MCF 10A (cell line): ENCODE measurements at regions of chr1 and their contacts with region 1.

Region 1: GRCh38 chr1:211654838-211655787 is 20.3 kb downstream of the NEK2 start:
- DNase-seq: peak; percentile 95
- H3K4me3 Mint-ChIP-seq: no peak overlapping the region
- H3K27ac Mint-ChIP-seq: no peak overlapping the region
- H3K4me1 Mint-ChIP-seq: peaks cover 26% of the 10 kb centered on the region
- H3K27me3 Mint-ChIP-seq: no peaks in the 10 kb centered on the region
- CTCF ChIP-seq: peak; percentile 100

Region 2: DNA sequence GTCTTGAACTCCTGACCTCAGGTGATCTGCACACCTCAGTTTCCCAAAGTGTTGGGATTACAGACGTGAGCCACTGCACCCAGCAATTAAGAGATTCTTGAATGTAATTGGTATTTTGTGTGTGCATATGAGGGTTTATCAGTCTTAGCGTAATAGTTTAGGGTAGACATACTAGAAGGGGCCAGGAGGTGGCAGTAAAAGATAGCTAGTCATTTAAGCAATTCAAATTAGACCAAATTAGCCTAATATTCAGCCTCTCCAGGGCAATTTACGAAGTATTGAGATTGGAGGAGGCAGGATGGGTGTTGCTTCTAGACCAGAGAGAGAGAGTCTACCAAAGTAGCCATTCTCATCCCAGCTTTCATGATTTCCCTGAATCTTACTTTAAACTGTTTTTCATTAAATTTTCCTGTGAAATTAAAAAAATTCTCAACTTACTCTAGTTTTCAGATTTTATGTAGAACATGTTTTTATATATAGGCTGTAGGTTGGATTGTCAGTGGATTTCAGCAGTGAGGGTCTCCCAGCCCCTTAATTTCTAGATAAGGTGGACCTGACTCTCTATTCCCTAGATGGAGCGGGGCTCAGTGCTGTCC is 1206.7 kb before region 1 on chr1:
- CTCF ChIA-PET with region 1: interaction called, 4 read pairs
- POLR2A ChIA-PET with region 1: no interaction called
- intact Hi-C with region 1: loop called (anchors 5 kb)
- DNase-seq: peak; percentile 71
- H3K4me3 Mint-ChIP-seq: no peak overlapping the region
- H3K27ac Mint-ChIP-seq: no peak overlapping the region
- H3K4me1 Mint-ChIP-seq: peaks cover 11% of the 10 kb centered on the region
- H3K27me3 Mint-ChIP-seq: peaks cover 52% of the 10 kb centered on the region
- CTCF ChIP-seq: peak; percentile 93

Region 3: GRCh38 chr1:211382714-211383480 is 272.2 kb before region 1 on chr1:
- CTCF ChIA-PET with region 1: interaction called, 3 read pairs
- POLR2A ChIA-PET with region 1: interaction called, 3 read pairs
- intact Hi-C with region 1: loop called (anchors 5 kb)
- DNase-seq: peak; percentile 99
- H3K4me3 Mint-ChIP-seq: peak overlapping the region; percentile 82
- H3K27ac Mint-ChIP-seq: peak overlapping the region; percentile 98
- H3K4me1 Mint-ChIP-seq: peaks cover 26% of the 10 kb centered on the region
- H3K27me3 Mint-ChIP-seq: no peaks in the 10 kb centered on the region
- CTCF ChIP-seq: no peak

Region 4: GRCh38 chr1:211527006-211527405 is 128.1 kb before region 1 on chr1:
- CTCF ChIA-PET with region 1: interaction called, 16 read pairs
- POLR2A ChIA-PET with region 1: no interaction called
- intact Hi-C with region 1: no loop called
- DNase-seq: no peak
- H3K4me3 Mint-ChIP-seq: no peak overlapping the region
- H3K27ac Mint-ChIP-seq: peak overlapping the region; percentile 4
- H3K4me1 Mint-ChIP-seq: peaks cover 39% of the 10 kb centered on the region
- H3K27me3 Mint-ChIP-seq: no peaks in the 10 kb centered on the region
- CTCF ChIP-seq: no peak

Region 5: GRCh38 chr1:211606914-211607755 is 48.0 kb before region 1 on chr1:
- CTCF ChIA-PET with region 1: interaction called, 36 read pairs
- POLR2A ChIA-PET with region 1: interaction called, 8 read pairs
- intact Hi-C with region 1: no loop called
- DNase-seq: peak; percentile 73
- H3K4me3 Mint-ChIP-seq: no peak overlapping the region
- H3K27ac Mint-ChIP-seq: no peak overlapping the region
- H3K4me1 Mint-ChIP-seq: peaks cover 40% of the 10 kb centered on the region
- H3K27me3 Mint-ChIP-seq: no peaks in the 10 kb centered on the region
- CTCF ChIP-seq: no peak

Region 6: DNA sequence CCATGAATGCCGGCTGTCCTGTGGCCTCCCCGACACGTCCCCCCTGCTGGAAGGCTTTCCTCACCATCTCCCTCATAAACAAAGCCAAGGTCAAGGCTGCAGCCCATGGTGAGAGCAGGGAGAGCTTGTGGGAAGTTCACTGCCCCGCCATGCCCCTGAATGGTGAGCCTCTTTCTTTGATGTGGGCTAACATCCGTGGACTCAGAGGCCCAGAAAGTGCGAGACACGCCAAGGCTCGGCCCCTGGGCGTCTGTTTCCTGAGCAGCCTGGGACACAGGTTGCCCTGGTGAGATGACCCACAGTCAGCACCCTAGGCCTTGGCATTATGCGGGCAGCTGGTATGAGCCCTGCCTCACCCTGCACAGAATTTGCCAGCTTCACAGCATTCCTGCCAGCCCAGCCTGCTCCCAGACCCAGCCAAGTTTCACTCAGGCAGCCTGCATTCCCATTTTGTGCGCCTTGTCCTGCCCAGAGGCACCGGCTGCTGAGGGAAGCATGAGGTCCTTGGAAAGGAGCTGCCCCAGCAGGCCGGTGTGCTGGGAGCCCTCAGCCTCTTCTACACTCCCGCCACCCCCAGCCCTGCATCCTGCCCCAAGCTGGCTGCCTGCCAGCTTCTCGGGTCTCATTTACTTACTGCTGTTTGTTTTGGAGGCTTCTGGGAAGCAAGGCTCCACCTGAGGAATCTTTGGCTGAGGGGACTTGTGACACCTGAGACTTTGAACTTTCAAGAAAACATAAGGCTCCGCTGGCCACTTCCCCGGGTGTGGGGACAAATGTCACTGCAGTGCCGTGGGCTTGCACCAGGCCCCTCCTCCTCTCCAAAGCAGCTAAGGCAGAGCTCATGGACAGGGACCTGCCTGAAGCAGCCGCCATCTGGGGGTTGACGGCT is 11.5 kb before region 1 on chr1:
- CTCF ChIA-PET with region 1: interaction called, 94 read pairs
- POLR2A ChIA-PET with region 1: interaction called, 24 read pairs
- intact Hi-C with region 1: no loop called
- DNase-seq: peak; percentile 97
- H3K4me3 Mint-ChIP-seq: peak overlapping the region; percentile 45
- H3K27ac Mint-ChIP-seq: peak overlapping the region; percentile 88
- H3K4me1 Mint-ChIP-seq: peaks cover 56% of the 10 kb centered on the region
- H3K27me3 Mint-ChIP-seq: no peaks in the 10 kb centered on the region
- CTCF ChIP-seq: no peak

Region 7: GRCh38 chr1:211687446-211688215 is 32.5 kb after region 1 on chr1:
- CTCF ChIA-PET with region 1: no interaction called
- POLR2A ChIA-PET with region 1: no interaction called
- intact Hi-C with region 1: no loop called
- DNase-seq: no peak
- H3K4me3 Mint-ChIP-seq: no peak overlapping the region
- H3K27ac Mint-ChIP-seq: no peak overlapping the region
- H3K4me1 Mint-ChIP-seq: no peaks in the 10 kb centered on the region
- H3K27me3 Mint-ChIP-seq: peaks cover 12% of the 10 kb centered on the region
- CTCF ChIP-seq: no peak